ENCODE measurements at regions of chr1 and their contacts with region 1.

Region 1: GRCh38 chr1:65339866-65340468 is 30.6 kb downstream of the DNAJC6 start:
- DNase-seq: peak; percentile 42
- H3K4me3 ChIP-seq: no peak overlapping the region
- H3K27ac ChIP-seq: no peak overlapping the region
- H3K4me1 ChIP-seq: peaks cover 30% of the 10 kb centered on the region
- H3K27me3 ChIP-seq: no peaks in the 10 kb centered on the region
- CTCF ChIP-seq: no peak

Region 2: GRCh38 chr1:65235867-65236805 is 103.8 kb before region 1 on chr1:
- CTCF ChIA-PET with region 1: no interaction called
- dilution Hi-C with region 1: no loop called
- in situ Hi-C with region 1: no loop called
- intact Hi-C with region 1: no loop called
- DNase-seq: peak; percentile 33
- H3K4me3 ChIP-seq: no peak overlapping the region
- H3K27ac ChIP-seq: no peak overlapping the region
- H3K4me1 ChIP-seq: peaks cover under 1% of the 10 kb centered on the region
- H3K27me3 ChIP-seq: no peaks in the 10 kb centered on the region
- CTCF ChIP-seq: peak; percentile 60 to 61

Region 3: DNA sequence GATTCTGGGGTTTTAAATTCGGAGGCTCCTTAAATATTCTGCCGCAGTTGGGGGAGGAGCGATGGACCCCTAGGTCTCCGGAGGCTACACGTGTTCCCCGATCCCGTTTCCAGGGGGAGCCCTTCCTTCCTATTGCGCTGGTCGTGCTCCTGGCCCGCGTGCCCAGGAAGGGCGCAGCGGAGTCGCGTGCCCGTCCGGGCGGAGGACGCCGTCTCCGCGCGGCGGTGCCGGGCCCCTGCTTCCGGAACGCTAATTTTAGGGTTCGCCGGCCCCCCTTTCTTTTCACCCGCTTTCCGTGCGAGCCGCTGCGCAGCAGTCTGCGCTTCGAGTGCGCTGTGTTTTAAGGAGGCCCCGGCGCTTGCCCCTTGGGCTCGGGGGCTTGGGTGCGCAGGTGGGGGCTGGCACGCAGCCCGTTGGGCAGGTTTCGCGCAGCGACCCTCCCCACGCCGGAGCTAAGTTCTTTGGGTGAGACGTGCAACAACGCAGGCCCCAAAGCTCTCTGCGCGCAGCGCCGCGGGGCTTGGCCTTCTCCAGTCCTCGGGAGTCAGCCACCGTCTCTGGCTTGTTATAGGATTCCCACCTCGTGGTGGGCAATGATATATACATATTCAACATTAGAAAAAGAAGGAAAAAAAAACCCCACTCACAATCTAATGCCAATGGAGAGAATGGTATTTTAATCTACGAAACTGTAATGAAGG is 74.2 kb before region 1 on chr1:
- CTCF ChIA-PET with region 1: no interaction called
- dilution Hi-C with region 1: no loop called
- in situ Hi-C with region 1: no loop called
- intact Hi-C with region 1: loop called (anchors 5 kb)
- DNase-seq: peak; percentile 46
- H3K4me3 ChIP-seq: peak overlapping the region; percentile 43 to 47 (median 46)
- H3K27ac ChIP-seq: no peak overlapping the region
- H3K4me1 ChIP-seq: peaks cover 15% of the 10 kb centered on the region
- H3K27me3 ChIP-seq: no peaks in the 10 kb centered on the region
- CTCF ChIP-seq: peak; percentile 8 to 55

Region 4: GRCh38 chr1:65278376-65279069 is 61.4 kb before region 1 on chr1:
- CTCF ChIA-PET with region 1: no interaction called
- dilution Hi-C with region 1: no loop called
- in situ Hi-C with region 1: no loop called
- intact Hi-C with region 1: no loop called
- DNase-seq: no peak
- H3K4me3 ChIP-seq: no peak overlapping the region
- H3K27ac ChIP-seq: no peak overlapping the region
- H3K4me1 ChIP-seq: no peaks in the 10 kb centered on the region
- H3K27me3 ChIP-seq: no peaks in the 10 kb centered on the region
- CTCF ChIP-seq: no peak

Measured in mammary epithelial cell (primary cell).